Calu3 (cell line): ENCODE measurements at regions of chr1 and their contacts with region 1.

Region 1: DNA sequence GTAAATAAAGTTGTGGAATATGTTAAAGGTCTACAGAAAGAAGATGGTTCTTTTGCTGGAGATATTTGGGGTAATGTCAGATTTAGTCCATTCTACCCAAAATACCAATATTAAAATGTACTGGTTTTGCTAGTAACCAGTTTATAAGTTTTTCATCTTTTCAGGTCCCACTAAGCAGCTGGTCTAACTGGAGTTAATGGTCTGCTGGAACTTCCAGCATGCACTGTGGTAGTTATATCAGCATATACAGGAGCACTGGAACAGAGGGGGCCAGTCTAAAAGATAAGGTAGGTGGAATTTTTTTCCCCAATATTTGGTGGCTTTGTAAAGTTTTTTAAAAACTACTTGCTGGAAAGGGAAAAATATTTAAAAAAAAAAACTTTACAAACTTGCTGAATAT is 3.9 kb downstream of the RABGGTB start:
- DNase-seq: no peak
- H3K4me3 Mint-ChIP-seq: peak overlapping the region; percentile 88
- H3K27ac Mint-ChIP-seq: peak overlapping the region; percentile 9
- H3K4me1 Mint-ChIP-seq: peaks cover 29% of the 10 kb centered on the region
- H3K27me3 Mint-ChIP-seq: no peaks in the 10 kb centered on the region
- CTCF ChIP-seq: no peak

Region 2: GRCh38 chr1:75724472-75725022 is 65.4 kb before region 1 on chr1 and contains the start of gene ACADM:
- CTCF ChIA-PET with region 1: no interaction called
- intact Hi-C with region 1: loop called (anchors 2 kb)
- DNase-seq: peak; percentile 81
- H3K4me3 Mint-ChIP-seq: peak within 1 kb of the TSS; percentile 100
- H3K27ac Mint-ChIP-seq: peak within 1 kb of the TSS; percentile 91
- H3K4me1 Mint-ChIP-seq: no peaks in the 10 kb centered on the region
- H3K27me3 Mint-ChIP-seq: no peaks in the 10 kb centered on the region
- CTCF ChIP-seq: no peak
- total RNA-seq, gene ACADM: 19.2 and 21.6 TPM in 2 replicates

Region 3: DNA sequence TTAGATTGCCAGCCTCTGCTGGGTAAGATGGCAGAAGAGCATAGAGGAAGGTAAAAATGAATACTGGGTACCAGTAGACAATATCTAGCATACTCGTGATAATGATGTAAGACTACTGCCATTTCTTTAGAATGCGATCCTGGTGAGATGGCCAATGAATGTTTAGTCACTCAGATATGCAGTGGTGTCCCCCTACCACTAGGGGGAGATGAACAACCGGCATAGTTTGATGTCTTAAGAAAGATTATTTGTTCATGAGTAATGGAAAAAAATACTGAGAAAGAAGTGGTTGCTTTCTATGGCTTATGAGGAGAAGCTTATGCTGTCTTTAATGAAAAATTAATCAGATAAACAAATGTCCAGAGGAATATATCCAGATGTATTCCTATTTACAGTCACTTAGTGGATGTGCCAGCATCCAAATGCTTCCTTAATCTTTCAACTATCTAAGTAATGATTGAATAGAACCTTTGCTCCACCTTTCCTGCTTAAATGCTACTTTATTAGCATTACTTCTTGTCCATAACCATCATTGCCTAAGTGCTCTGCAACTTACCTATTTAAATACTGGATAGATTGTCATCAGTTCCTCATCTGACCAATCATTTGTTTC is 541.1 kb after region 1 on chr1:
- CTCF ChIA-PET with region 1: no interaction called
- intact Hi-C with region 1: no loop called
- DNase-seq: peak; percentile 32
- H3K4me3 Mint-ChIP-seq: no peak overlapping the region
- H3K27ac Mint-ChIP-seq: no peak overlapping the region
- H3K4me1 Mint-ChIP-seq: no peaks in the 10 kb centered on the region
- H3K27me3 Mint-ChIP-seq: no peaks in the 10 kb centered on the region
- CTCF ChIP-seq: peak; percentile 70